OCI-LY7 (cell line): ENCODE measurements at regions of chr22 and their contacts with region 1.

Region 1: GRCh38 chr22:26483439-26484359 is at the starts of genes HPS4 and SRRD:
- DNase-seq: peak; percentile 94
- H3K4me3 ChIP-seq: peak within 1 kb of the TSS; percentile 86
- H3K27ac ChIP-seq: peak within 1 kb of the TSS; percentile 95
- H3K4me1 ChIP-seq: peaks cover 69% of the 10 kb centered on the region
- CTCF ChIP-seq: no peak
- total RNA-seq, gene HPS4: 64.8 and 77.4 TPM in 2 replicates
- total RNA-seq, gene SRRD: 20.7 and 23.1 TPM in 2 replicates

Region 2: GRCh38 chr22:26516503-26516902 is 32.8 kb after region 1 on chr22:
- CTCF ChIA-PET with region 1: interaction called, 3 read pairs
- POLR2A ChIA-PET with region 1: interaction called, 10 read pairs
- intact Hi-C with region 1: no loop called
- DNase-seq: no peak
- H3K4me3 ChIP-seq: no peak overlapping the region
- H3K27ac ChIP-seq: no peak overlapping the region
- H3K4me1 ChIP-seq: peaks cover 25% of the 10 kb centered on the region
- CTCF ChIP-seq: no peak

Region 3: GRCh38 chr22:26660961-26661578 is 177.4 kb after region 1 on chr22:
- CTCF ChIA-PET with region 1: no interaction called
- POLR2A ChIA-PET with region 1: interaction called, 10 read pairs
- intact Hi-C with region 1: no loop called
- DNase-seq: peak; percentile 51
- H3K4me3 ChIP-seq: peak overlapping the region; percentile 16
- H3K27ac ChIP-seq: peak overlapping the region; percentile 58
- H3K4me1 ChIP-seq: peaks cover 93% of the 10 kb centered on the region
- CTCF ChIP-seq: no peak; the same call in 1 of the 2 replicates

Region 4: DNA sequence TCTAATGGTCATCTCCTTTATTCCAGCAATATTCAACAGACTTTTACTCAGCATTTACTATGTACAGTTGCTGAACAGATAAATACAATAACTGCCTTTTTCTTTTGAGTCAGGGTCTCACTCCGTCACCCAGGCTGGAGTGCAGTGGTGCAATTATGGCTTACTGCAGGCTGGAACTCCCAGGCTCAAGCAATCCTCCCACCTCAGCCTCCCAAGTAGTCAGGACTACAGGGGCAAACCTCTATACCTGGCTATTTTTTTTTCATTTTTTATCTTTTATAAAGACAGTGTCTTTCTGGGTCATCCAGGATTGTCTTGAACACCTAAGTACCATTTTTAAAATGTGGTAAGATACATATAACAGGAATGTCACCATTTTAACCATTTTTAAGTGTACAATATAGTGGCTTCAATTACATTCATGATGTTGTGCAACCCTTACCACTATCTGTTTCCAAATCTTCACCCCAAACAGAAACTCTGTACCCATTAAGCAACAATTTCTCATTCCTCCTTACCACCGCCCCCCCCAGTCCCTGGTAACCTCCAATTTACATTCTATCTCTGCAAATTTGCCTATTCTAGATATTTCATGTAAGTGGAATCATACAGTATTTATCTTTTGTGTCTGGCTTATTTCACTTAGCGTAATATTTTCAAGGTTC is 241.4 kb after region 1 on chr22:
- CTCF ChIA-PET with region 1: no interaction called
- POLR2A ChIA-PET with region 1: no interaction called
- intact Hi-C with region 1: no loop called
- DNase-seq: no peak
- H3K4me3 ChIP-seq: no peak overlapping the region
- H3K27ac ChIP-seq: no peak overlapping the region
- H3K4me1 ChIP-seq: no peaks in the 10 kb centered on the region
- CTCF ChIP-seq: no peak